ENCODE measurements at regions of chr14 and their contacts with region 1.

Region 1: GRCh38 chr14:88667555-88668273 is 104.9 kb downstream of the ZC3H14 start:
- DNase-seq: peak; percentile 52
- ATAC-seq: peak; percentile 84
- H3K4me3 Mint-ChIP-seq: no peak overlapping the region
- H3K27ac Mint-ChIP-seq: no peak overlapping the region
- H3K4me1 Mint-ChIP-seq: peaks cover 2% of the 10 kb centered on the region
- H3K27me3 Mint-ChIP-seq: no peaks in the 10 kb centered on the region
- CTCF ChIP-seq: peak; percentile 87

Region 2: DNA sequence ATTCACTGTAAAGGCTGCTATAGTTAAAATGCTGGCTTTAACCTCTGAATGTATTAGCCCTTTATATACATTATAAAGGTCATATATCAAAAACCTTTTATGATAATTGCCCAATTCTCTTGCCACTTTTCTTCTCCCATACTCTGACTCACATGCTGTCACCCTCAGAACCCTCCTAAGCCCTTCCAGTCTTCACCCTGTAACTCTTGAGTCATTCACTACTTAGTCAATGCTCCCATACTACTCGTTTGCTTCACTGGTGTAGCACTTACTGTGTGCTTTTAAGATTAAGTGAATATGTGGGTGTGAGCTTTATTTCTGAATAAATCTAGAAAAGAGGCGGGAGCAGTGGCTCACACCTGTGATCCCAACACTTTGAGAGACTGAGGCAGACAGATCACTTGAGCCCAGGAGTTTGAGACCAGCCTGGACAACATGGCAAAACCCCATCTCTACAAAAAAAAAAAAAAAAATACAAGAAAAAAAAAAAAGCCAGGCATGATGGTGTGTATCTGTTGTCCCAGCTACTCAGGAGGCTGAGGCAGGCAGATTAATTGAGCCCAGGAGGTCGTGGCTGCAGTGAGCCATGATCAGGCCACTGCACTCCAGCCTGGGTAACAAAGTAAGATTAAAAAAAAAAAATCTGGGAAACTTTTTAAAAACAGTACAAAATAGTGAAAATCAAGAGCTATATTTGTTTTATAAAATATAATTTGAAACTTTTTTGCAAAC is 244.6 kb before region 1 on chr14:
- CTCF ChIA-PET with region 1: no interaction called
- POLR2A ChIA-PET with region 1: no interaction called
- intact Hi-C with region 1: no loop called
- DNase-seq: no peak
- ATAC-seq: peak; percentile 80
- H3K4me3 Mint-ChIP-seq: no peak overlapping the region
- H3K27ac Mint-ChIP-seq: no peak overlapping the region
- H3K4me1 Mint-ChIP-seq: peaks cover 3% of the 10 kb centered on the region
- H3K27me3 Mint-ChIP-seq: no peaks in the 10 kb centered on the region
- CTCF ChIP-seq: no peak

Region 3: GRCh38 chr14:88682495-88683114 is 14.9 kb after region 1 on chr14:
- CTCF ChIA-PET with region 1: interaction called, 34 read pairs
- POLR2A ChIA-PET with region 1: no interaction called
- intact Hi-C with region 1: no loop called
- DNase-seq: peak; percentile 37
- ATAC-seq: peak; percentile 47
- H3K4me3 Mint-ChIP-seq: no peak overlapping the region
- H3K27ac Mint-ChIP-seq: no peak overlapping the region
- H3K4me1 Mint-ChIP-seq: no peaks in the 10 kb centered on the region
- H3K27me3 Mint-ChIP-seq: no peaks in the 10 kb centered on the region
- CTCF ChIP-seq: no peak

Region 4: GRCh38 chr14:88824314-88825077 is 156.8 kb after region 1 on chr14 and contains the start of gene TTC8:
- CTCF ChIA-PET with region 1: interaction called, 13 read pairs
- POLR2A ChIA-PET with region 1: no interaction called
- intact Hi-C with region 1: no loop called
- DNase-seq: peak; percentile 87
- ATAC-seq: peak; percentile 98
- H3K4me3 Mint-ChIP-seq: peak within 1 kb of the TSS; percentile 78
- H3K27ac Mint-ChIP-seq: peak within 1 kb of the TSS; percentile 95
- H3K4me1 Mint-ChIP-seq: peaks cover 9% of the 10 kb centered on the region
- H3K27me3 Mint-ChIP-seq: peaks cover 2% of the 10 kb centered on the region
- CTCF ChIP-seq: no peak
- total RNA-seq, gene TTC8: 2.5 to 4.0 TPM

Region 5: DNA sequence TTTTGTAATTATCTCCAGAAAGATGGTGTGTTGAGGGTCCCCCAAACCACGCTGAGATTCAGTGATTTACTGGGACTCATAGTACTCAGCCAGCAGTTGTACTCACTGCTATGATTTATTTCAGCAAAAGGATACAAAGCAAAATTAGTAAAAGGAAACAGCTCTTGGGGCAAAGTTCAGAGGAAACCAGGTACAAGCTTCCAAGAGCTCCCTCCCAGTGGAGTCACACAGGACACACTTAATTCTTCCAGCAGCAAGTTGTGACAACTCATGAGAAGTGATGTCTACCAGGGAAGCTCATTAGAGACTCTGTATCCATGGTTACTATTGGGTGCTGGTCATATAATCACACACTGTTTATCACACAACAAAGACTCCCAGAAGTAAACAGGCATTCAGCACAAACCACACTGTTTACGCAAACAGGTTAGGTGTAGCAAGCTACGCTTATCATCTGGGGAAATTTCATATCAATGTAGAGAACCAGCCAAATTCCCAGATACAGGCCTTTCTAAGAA is 195.5 kb after region 1 on chr14:
- CTCF ChIA-PET with region 1: interaction called, 11 read pairs
- POLR2A ChIA-PET with region 1: no interaction called
- intact Hi-C with region 1: loop called (anchors 5 kb)
- DNase-seq: no peak
- ATAC-seq: no peak
- H3K4me3 Mint-ChIP-seq: no peak overlapping the region
- H3K27ac Mint-ChIP-seq: no peak overlapping the region
- H3K4me1 Mint-ChIP-seq: no peaks in the 10 kb centered on the region
- H3K27me3 Mint-ChIP-seq: no peaks in the 10 kb centered on the region
- CTCF ChIP-seq: no peak

Region 6: GRCh38 chr14:88868558-88869159 is 200.9 kb after region 1 on chr14:
- CTCF ChIA-PET with region 1: interaction called, 11 read pairs
- POLR2A ChIA-PET with region 1: no interaction called
- intact Hi-C with region 1: loop called (anchors 5 kb)
- DNase-seq: no peak
- ATAC-seq: no peak
- H3K4me3 Mint-ChIP-seq: no peak overlapping the region
- H3K27ac Mint-ChIP-seq: no peak overlapping the region
- H3K4me1 Mint-ChIP-seq: no peaks in the 10 kb centered on the region
- H3K27me3 Mint-ChIP-seq: no peaks in the 10 kb centered on the region
- CTCF ChIP-seq: peak; percentile 29

Region 7: DNA sequence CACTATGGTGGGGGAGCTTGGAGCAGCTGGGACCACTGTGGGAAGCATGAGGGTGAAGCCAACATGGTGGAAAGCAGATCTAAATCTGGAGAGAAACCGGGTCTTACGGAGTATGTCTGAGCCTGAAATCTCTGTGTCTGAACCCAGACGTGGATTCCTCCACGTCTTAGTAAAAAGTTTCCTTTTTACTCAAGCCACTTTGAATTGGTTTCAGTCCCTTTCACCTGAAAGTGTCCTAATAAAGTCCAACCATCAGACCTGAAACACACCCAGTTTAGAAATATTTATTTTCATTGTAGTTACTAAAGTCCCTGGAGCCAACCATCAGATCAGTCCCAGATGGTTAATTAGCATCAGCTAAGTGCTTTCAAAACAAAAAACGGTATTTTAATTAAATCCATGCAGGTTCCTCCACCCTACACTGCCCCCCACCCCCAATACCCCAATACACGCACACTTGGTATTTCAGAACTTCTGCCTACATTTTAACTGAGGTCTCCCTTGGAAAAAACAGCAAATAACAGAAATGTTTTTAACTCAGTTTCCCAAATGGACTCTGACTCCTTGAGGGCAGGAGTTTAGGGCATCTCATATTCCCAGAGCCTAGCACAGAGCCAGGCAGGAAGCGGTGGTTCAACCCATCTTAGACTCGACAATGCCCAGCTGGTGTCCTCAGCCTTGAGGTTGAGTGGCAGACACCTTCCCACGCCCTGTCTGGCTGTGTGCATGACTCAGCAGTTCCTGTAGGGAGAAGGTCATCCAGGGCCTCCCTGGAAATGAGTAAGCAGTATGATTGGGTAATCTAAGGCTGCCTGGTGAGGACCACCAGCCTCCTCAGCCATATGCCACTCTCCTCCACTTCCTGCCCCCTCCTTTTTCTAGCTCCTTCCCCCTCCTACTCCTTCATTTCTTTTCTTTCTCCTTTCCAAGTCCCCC is 332.6 kb after region 1 on chr14:
- CTCF ChIA-PET with region 1: no interaction called
- POLR2A ChIA-PET with region 1: no interaction called
- intact Hi-C with region 1: loop called (anchors 10 kb)
- DNase-seq: peak; percentile 71
- ATAC-seq: peak; percentile 88
- H3K4me3 Mint-ChIP-seq: no peak overlapping the region
- H3K27ac Mint-ChIP-seq: no peak overlapping the region
- H3K4me1 Mint-ChIP-seq: peaks cover 5% of the 10 kb centered on the region
- H3K27me3 Mint-ChIP-seq: peaks cover 18% of the 10 kb centered on the region
- CTCF ChIP-seq: no peak

Measured in activated CD8-positive, alpha-beta T cell treated with anti-CD3 and anti-CD28 coated beads for 36 hours (primary cell).